Left ventricle myocardium inferior (tissue), 1 donor: ENCODE measurements at regions of chr2 and their contacts with region 1.

Region 1: DNA sequence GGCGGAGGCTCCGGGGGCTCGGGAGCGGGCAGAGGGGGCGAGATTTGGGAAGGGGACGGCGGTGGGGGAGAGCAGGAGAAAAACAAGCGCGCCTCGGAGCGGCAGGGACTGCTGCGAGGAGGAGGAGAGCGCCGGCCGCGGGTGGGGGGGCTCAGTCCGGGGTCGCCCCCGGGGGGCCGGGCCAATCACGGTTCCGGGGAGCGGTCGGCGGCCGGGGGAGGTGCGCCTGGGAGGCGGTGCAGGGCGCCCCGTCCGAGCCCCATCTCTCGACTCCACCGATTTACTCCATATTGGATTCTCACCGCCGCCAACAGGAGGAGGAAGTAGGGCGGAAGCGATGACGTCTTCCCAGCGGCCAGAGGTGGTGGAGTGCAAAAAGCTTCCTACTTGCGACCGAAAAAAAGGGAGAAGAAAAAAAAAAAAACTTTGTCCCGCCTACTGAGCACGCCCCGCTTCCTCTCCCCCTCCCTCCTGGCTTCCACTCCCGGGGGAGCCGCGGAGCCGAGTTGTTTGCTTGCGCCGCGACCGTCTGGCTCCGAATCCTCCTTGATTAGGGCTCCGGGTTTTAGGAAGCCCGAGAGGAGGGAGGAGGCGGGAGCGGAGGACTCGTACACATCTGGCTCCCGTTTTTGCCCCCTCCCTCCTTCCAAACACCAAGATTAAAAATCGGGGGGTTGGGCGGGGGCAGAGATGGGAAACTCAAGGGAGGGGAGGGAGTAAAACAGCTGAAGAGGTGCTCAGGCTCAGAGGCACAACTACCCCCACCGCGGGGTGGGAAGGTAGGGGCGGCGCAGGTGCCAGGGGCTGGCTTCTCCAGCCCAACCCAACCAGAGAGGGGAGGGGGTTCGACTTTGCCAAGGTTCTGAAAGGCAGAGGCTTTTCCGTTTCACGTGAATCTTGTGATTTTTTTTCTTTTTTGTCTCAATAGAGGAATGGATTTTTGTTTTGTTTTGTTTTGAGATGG is at the start of gene SPRED2:
- DNase-seq: peak; percentile 95
- H3K4me3 ChIP-seq: peak within 1 kb of the TSS; percentile 97
- H3K27ac ChIP-seq: peak within 1 kb of the TSS; percentile 95
- H3K4me1 ChIP-seq: peaks cover 65% of the 10 kb centered on the region
- H3K27me3 ChIP-seq: no peaks in the 10 kb centered on the region
- CTCF ChIP-seq: no peak
- total RNA-seq, gene SPRED2: 18.9 TPM

Region 2: GRCh38 chr2:65278531-65278981 is 154.0 kb before region 1 on chr2:
- intact Hi-C with region 1: loop called (anchors 10 kb)
- DNase-seq: no peak
- H3K4me3 ChIP-seq: no peak overlapping the region
- H3K27ac ChIP-seq: peak overlapping the region; percentile 51
- H3K4me1 ChIP-seq: peaks cover 71% of the 10 kb centered on the region
- H3K27me3 ChIP-seq: peaks cover 37% of the 10 kb centered on the region
- CTCF ChIP-seq: no peak

Region 3: GRCh38 chr2:65545837-65546805 is 113.6 kb after region 1 on chr2:
- intact Hi-C with region 1: loop called (anchors 5 kb)
- DNase-seq: no peak
- H3K4me3 ChIP-seq: no peak overlapping the region
- H3K27ac ChIP-seq: peak overlapping the region; percentile 69
- H3K4me1 ChIP-seq: peaks cover 18% of the 10 kb centered on the region
- H3K27me3 ChIP-seq: no peaks in the 10 kb centered on the region
- CTCF ChIP-seq: no peak

Region 4: GRCh38 chr2:65846989-65847678 is 414.6 kb after region 1 on chr2:
- intact Hi-C with region 1: no loop called
- DNase-seq: peak; percentile 18
- H3K4me3 ChIP-seq: no peak overlapping the region
- H3K27ac ChIP-seq: no peak overlapping the region
- H3K4me1 ChIP-seq: no peaks in the 10 kb centered on the region
- H3K27me3 ChIP-seq: peaks cover 9% of the 10 kb centered on the region
- CTCF ChIP-seq: no peak